ENCODE measurements at regions of chr9 and their contacts with region 1.

Region 1: GRCh38 chr9:111525056-111525977 is at the start of gene ZNF483:
- DNase-seq: peak; percentile 77
- total RNA-seq, gene ZNF483: 7.4 TPM

Region 2: GRCh38 chr9:111456529-111456928 is 68.8 kb before region 1 on chr9:
- intact Hi-C with region 1: loop called (anchors 10 kb)
- DNase-seq: no peak

Measured in cardiac septum (tissue), 1 donor.